Motor neuron (in vitro differentiated cells): ENCODE measurements at regions of chr1 and their contacts with region 1.

Region 1: DNA sequence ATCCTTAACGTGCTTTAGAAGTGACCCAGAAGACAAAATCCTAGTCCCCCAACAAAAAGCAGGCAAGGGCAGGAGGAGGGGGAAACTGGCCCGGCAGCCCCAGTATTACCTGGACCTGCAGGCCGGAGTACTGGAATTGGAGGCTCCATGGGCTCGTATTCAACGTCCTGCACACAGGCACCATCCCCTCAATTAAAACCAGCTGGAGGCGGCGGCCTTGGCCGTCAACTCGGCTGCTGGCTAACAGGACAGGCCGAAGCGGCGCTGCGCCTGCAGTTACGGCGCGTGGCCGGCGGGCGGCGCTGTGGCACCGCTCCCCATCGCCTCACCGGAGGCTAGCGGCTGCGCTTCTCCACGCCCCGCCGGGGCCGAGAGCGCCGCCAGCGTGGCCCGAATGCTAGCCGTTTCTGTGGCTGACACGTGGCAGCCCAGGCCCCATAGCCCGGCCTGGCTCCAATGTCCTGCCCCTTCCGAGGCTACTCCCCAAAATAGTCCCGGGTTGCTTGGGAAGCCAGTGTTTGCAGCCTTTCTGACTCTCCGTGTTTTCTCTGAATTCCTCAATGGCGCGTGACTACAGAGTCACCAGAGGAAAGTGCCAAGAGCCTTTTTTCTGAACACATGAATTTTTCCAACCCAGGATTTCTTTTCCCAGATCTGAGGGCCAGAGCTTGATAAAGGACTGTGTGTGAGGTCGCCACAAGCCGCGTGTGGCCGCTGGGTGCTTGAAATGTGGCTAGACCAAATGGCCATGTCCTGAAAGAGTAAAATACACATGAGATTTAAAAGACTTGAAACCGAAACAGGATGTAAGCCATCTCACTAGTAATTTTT is 82.5 kb downstream of the HHIPL2 start:
- ATAC-seq: peak; percentile 96 to 100 (median 98)
- H3K4me3 ChIP-seq: peak overlapping the region; percentile 11 to 38 (median 29)
- H3K27ac ChIP-seq: peak overlapping the region; percentile 71 to 86
- H3K4me1 ChIP-seq: peaks cover 3 to 4% of the 10 kb centered on the region in 2 donors

Region 2: GRCh38 chr1:220879076-220879508 is 1586.3 kb before region 1 on chr1 and contains the start of gene HLX:
- in situ Hi-C with region 1: loop called in 1 of 9 experiments (anchors 25 kb)
- ATAC-seq: peak; percentile 36 to 94 (median 48)
- H3K4me3 ChIP-seq: peak within 1 kb of the TSS; percentile 17 to 36 (median 32)
- H3K27ac ChIP-seq: no peak within 1 kb of the TSS
- H3K4me1 ChIP-seq: peaks cover 13 to 18% of the 10 kb centered on the region in 2 donors
- total RNA-seq, gene HLX: 0.22 to 1.1 (median 0.41) TPM

Region 3: DNA sequence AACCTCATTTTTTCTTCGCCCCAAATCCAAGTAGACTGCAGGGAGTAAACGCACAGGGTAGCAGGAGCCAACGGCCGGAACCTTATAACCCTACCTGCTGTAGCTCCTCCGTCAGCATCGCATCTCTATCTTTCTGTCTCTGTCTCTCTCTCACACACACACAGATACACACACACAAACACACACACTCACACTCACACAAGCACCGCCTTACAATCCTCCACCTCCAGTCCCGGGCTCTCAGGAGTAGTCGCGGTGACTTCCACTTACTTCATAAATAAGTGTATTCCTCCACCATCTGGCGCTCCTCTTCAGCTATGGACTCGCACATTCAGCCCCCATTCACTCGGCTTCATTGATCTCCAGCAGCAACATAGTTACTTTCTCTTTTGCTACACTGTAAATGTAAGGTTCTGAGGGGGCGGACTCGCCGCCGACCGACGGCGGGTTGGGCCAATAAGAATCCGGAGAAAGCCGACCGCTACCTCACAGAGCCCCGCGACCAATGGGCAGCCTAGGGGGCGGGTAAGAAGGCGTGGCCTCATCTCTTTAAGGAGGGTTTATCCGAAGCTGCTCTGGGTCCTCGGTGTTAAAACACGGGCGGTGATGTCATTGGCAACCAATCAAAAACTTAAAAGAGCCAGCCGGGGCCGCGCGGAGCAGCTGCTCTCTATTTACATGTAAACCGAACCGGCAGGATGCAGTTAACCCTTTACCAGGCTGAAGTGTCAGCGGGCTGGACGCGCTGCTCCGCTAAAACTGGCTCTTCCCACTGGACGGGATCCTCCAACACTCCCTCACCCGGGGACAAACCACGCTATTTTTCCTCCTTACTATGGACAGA is 723.5 kb before region 1 on chr1 and contains the start of gene DUSP10:
- in situ Hi-C with region 1: loop called in 1 of 9 experiments (anchors 25 kb)
- ATAC-seq: peak; percentile 70 to 89 (median 86)
- H3K4me3 ChIP-seq: peak within 1 kb of the TSS; percentile 38 to 55 (median 52)
- H3K27ac ChIP-seq: peak within 1 kb of the TSS; percentile 36 to 82
- H3K4me1 ChIP-seq: peaks cover 4 to 10% of the 10 kb centered on the region in 2 donors
- total RNA-seq, gene DUSP10: 0.91 to 20.7 (median 10.3) TPM

Region 4: DNA sequence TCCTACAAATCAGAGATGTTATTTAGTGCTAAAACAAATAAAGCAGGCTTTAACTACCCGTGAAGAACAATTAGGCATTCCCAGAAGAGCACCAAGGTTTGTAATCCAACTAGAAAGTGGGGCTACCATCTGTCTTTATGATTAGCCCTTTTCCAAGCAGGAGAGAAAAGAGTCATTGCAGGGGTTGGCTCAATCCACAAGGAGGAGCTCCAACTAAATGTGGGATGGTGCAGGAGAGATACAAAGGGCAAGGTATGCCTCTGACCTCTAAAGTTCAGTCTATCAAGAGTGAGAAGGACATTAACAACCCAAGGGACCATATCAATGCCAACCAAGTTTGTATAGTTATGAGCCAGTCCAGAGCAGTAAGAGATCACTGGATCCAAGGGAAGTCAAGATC is 340.8 kb before region 1 on chr1:
- in situ Hi-C with region 1: loop called in 1 of 9 experiments (anchors 25 kb)
- ATAC-seq: peak in 3 of 8 experiments; percentile 29 to 41 (median 37)
- H3K4me3 ChIP-seq: no peak overlapping the region
- H3K27ac ChIP-seq: no peak overlapping the region
- H3K4me1 ChIP-seq: no peaks in the 10 kb centered on the region

Region 5: GRCh38 chr1:222634180-222635013 is 169.0 kb after region 1 on chr1:
- in situ Hi-C with region 1: loop called in 7 of 9 experiments (anchors 10 to 25 kb)
- ATAC-seq: peak; percentile 60 to 80 (median 73)
- H3K4me3 ChIP-seq: no peak overlapping the region
- H3K27ac ChIP-seq: no peak overlapping the region
- H3K4me1 ChIP-seq: no peaks in the 10 kb centered on the region

Region 6: DNA sequence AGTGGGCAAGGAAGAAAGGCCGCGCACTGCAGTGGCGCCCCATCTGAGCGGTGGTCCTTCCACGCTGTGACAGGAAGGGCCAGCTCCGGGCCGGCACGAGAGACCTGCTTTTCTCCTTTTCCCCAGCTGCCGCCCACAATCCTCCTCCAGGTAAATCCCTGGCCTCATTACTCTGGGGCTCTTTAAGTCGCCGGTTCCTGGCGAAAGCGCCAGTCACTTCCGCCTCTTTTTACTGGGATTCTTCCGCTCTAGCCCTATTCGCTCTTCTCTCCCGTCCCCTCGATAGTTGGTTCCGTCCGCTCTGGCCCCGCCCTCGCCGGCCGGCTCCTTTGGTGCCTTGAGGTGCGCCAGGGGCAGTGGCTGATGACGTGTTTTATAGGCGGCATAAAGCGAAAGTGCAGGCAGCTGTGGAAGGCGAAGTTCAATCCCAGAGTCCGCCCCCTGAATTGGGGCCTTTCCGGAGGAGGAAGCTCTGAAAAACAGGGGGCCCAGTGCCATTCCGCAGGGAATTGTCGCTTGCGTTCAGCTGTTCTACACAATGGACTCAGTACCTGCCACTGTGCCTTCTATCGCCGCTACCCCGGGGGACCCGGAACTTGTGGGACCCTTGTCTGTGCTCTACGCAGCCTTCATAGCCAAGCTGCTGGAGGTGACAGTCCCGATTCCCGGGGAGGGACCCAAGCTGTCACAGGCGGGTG is 178.7 kb after region 1 on chr1:
- in situ Hi-C with region 1: loop called in 7 of 9 experiments (anchors 10 to 25 kb)
- ATAC-seq: peak; percentile 96 to 99 (median 97)
- H3K4me3 ChIP-seq: peak overlapping the region; percentile 56 to 85 (median 80)
- H3K27ac ChIP-seq: peak overlapping the region; percentile 73 to 91
- H3K4me1 ChIP-seq: peaks cover 6 to 11% of the 10 kb centered on the region in 2 donors

Region 7: DNA sequence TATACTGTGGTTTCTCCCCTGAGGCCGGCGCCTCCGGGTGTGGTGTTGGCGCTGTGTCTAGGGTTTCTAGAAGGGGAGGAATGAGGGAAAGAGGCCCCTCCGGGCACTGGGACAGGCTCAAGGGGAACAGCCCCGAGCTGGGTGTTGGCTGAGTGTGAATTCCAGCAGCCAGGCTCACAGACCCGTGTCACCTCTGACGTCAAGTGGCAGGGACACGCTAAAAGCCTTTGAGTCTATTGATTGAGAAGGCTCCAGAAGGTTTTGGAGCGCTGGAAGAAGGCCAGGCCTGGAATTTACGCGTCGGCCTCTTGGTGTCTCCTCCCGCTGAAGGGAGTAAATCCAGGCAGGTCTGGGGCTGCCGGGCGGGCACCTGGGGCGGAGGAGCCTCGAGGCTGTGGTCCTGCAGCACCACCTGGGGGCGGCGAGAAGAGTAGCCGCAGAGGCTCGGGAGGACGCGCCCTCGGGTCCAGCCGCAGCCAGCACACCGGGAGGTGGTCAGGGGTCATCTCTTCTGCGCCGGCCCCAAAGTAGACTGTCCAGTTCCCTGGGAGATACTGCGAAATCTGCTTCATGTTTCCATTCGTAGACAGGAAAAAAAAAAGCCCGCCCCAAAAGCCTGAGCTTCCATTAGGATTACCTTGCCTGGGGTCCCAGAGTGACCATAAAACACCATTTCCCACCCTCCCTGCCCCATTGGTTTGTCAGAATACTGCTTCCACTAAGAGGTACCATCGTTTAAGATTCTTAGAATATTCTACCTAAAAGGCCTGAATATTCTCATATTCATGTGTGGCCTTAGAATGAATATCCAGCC is 616.0 kb after region 1 on chr1:
- in situ Hi-C with region 1: loop called in 1 of 9 experiments (anchors 25 kb)
- ATAC-seq: peak; percentile 94 to 99 (median 97)
- H3K4me3 ChIP-seq: peak overlapping the region in 2 of 5 donors; percentile 0 to 8
- H3K27ac ChIP-seq: no peak overlapping the region
- H3K4me1 ChIP-seq: no peaks in the 10 kb centered on the region